ENCODE measurements at regions of chr2 and their contacts with region 1.

Region 1: GRCh38 chr2:20661067-20661980 is 5.6 kb upstream of the GDF7 start:
- DNase-seq: peak; percentile 69 to 84
- H3K4me3 ChIP-seq: no peak overlapping the region
- H3K27ac ChIP-seq: no peak overlapping the region
- H3K4me1 ChIP-seq: peaks cover 3 to 15% (median 8%) of the 10 kb centered on the region in 4 experiments
- H3K27me3 ChIP-seq: peaks cover 39 to 50% (median 48%) of the 10 kb centered on the region in 4 experiments
- CTCF ChIP-seq: peak in 2 of 3 experiments; percentile 92 to 97; a peak in 3 of 4 replicates
- EP300 ChIP-seq: no peak
- POLR2A ChIP-seq: no peak
- RAD21 ChIP-seq: peak; percentile 96 to 97

Region 2: GRCh38 chr2:20642055-20642971 is 19.0 kb before region 1 on chr2:
- CTCF ChIA-PET with region 1: interaction called, 14 read pairs
- POLR2A ChIA-PET with region 1: interaction called, 3 read pairs
- DNase-seq: peak; percentile 50 to 91
- H3K4me3 ChIP-seq: no peak overlapping the region
- H3K27ac ChIP-seq: no peak overlapping the region
- H3K4me1 ChIP-seq: no peaks in the 10 kb centered on the region
- H3K27me3 ChIP-seq: no peaks in the 10 kb centered on the region
- CTCF ChIP-seq: peak in 2 of 3 experiments; percentile 95; a peak in 3 of 4 replicates
- EP300 ChIP-seq: no peak
- POLR2A ChIP-seq: no peak
- RAD21 ChIP-seq: peak; percentile 93 to 95

Region 3: DNA sequence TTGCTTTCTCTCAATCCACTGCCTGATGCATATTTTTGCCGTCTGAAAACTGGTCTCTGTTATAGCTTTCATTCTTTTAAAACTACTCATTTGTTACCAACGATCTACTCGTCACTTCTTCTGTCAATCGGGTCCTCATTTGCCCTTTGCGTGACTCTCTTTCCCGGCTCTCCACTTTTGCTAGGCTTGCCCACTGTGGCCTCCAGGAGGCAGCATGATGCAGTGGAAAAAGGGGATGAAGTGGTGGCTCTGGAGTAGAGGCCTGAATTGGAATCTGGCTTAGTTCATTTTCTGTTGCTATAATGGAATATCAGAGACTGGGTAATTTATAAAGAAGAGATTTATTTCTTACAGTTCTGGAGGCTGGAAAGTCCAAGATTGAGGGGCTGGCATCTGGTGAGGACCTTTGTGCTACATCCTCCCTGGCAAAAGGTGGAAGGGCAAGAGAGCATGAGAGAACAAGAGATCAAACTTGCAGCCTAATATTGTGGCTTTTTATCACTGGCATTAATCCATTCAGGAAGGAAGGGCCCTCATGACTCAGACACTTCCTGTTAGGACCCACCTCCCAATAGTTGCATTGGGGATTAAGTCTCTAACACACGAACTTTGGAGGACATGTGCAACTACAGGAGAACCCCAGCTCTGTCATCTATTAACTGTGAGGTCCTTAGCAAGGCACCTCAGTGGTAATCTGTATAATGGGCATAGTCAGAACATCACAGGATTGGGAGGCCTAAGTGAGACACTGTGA is 21.0 kb after region 1 on chr2:
- CTCF ChIA-PET with region 1: interaction called, 266 read pairs
- POLR2A ChIA-PET with region 1: interaction called, 6 read pairs
- DNase-seq: peak in 1 of 2 experiments; percentile 63
- H3K4me3 ChIP-seq: no peak overlapping the region
- H3K27ac ChIP-seq: no peak overlapping the region
- H3K4me1 ChIP-seq: no peaks in the 10 kb centered on the region; a peak in 1 of 7 replicates
- H3K27me3 ChIP-seq: no peaks in the 10 kb centered on the region
- CTCF ChIP-seq: peak; percentile 75 to 78 (median 77)
- EP300 ChIP-seq: no peak
- POLR2A ChIP-seq: no peak
- RAD21 ChIP-seq: peak; percentile 78 to 82

Region 4: GRCh38 chr2:20707601-20708000 is 46.3 kb after region 1 on chr2:
- CTCF ChIA-PET with region 1: interaction called, 14 read pairs
- POLR2A ChIA-PET with region 1: no interaction called
- DNase-seq: no peak
- H3K4me3 ChIP-seq: no peak overlapping the region
- H3K27ac ChIP-seq: no peak overlapping the region
- H3K4me1 ChIP-seq: peaks cover 0 to 3% (median 0%) of the 10 kb centered on the region in 4 experiments; a peak in 2 of 7 replicates
- H3K27me3 ChIP-seq: no peaks in the 10 kb centered on the region
- CTCF ChIP-seq: no peak
- EP300 ChIP-seq: no peak
- POLR2A ChIP-seq: no peak
- RAD21 ChIP-seq: no peak

Region 5: DNA sequence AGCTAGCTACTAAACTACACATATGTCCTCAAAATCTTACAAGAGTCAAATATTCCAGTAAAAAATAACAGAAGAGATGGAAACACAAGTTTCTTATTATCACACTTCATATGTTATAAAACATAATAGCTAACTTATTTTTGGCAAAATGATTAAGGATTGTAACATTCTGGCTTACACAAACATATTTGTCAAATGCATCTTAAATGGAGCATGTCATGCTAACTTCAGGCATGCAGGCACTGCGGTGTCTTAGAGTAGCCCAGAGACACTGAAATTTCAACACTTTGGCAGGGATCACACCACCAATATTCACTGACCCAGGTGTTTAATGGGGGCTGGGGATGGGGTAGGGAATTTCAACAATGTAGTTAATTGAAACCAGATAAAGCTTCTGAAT is 110.0 kb after region 1 on chr2:
- CTCF ChIA-PET with region 1: interaction called, 10 read pairs
- POLR2A ChIA-PET with region 1: no interaction called
- DNase-seq: no peak
- H3K4me3 ChIP-seq: no peak overlapping the region
- H3K27ac ChIP-seq: no peak overlapping the region
- H3K4me1 ChIP-seq: no peaks in the 10 kb centered on the region
- H3K27me3 ChIP-seq: no peaks in the 10 kb centered on the region
- CTCF ChIP-seq: no peak
- EP300 ChIP-seq: no peak
- POLR2A ChIP-seq: no peak
- RAD21 ChIP-seq: no peak

Region 6: DNA sequence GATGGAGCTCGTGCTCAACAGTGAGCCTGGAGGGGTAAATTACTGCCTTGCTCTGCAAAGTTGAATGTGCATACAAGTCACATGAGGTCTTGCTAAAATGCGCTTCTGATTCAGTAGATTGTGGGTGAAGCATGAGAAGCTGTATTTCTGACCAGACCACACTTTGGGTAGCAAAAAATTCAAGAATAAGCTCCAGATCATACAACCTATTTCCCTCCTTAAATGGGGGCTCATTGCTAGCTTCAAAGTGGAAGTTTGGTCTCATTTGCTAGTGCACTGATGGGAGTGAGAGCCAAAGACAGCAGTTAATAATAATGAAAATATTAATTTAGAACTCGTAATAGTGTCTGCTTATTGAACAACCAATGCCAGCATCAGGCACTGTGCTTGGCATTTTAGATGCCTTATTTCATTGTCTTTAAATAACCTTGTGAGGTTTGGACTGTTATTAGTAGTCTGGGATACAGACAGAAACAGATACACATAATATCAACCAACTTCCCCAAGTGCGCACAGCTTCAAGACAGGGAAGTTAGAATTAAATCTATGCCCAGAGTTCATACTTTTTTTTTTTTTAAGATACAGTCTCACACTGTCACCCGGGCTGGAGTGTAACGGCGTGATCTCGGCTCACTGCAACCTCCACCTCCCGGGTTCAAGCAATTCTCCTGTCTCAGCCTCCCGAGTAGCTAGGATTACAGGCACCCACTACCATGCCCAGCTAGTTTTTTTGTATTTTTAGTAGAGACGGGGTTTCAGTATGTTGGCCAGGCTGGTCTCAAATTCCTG is 364.6 kb after region 1 on chr2:
- CTCF ChIA-PET with region 1: interaction called, 14 read pairs
- POLR2A ChIA-PET with region 1: no interaction called
- DNase-seq: no peak
- H3K4me3 ChIP-seq: no peak overlapping the region
- H3K27ac ChIP-seq: no peak overlapping the region
- H3K4me1 ChIP-seq: no peaks in the 10 kb centered on the region
- H3K27me3 ChIP-seq: no peaks in the 10 kb centered on the region
- CTCF ChIP-seq: no peak
- EP300 ChIP-seq: no peak
- POLR2A ChIP-seq: no peak
- RAD21 ChIP-seq: no peak

Measured in H1 (cell line).